Endothelial cell of umbilical vein (primary cell): ENCODE measurements at regions of chr14 and their contacts with region 1.

Region 1: GRCh38 chr14:76876076-76876475 is 49.9 kb downstream of the LRRC74A start:
- DNase-seq: peak; percentile 68
- H3K4me3 ChIP-seq: no peak overlapping the region
- H3K27ac ChIP-seq: no peak overlapping the region
- H3K4me1 ChIP-seq: no peaks in the 10 kb centered on the region
- H3K27me3 ChIP-seq: no peaks in the 10 kb centered on the region
- CTCF ChIP-seq: peak; percentile 92 to 94
- POLR2A ChIP-seq: no peak

Region 2: DNA sequence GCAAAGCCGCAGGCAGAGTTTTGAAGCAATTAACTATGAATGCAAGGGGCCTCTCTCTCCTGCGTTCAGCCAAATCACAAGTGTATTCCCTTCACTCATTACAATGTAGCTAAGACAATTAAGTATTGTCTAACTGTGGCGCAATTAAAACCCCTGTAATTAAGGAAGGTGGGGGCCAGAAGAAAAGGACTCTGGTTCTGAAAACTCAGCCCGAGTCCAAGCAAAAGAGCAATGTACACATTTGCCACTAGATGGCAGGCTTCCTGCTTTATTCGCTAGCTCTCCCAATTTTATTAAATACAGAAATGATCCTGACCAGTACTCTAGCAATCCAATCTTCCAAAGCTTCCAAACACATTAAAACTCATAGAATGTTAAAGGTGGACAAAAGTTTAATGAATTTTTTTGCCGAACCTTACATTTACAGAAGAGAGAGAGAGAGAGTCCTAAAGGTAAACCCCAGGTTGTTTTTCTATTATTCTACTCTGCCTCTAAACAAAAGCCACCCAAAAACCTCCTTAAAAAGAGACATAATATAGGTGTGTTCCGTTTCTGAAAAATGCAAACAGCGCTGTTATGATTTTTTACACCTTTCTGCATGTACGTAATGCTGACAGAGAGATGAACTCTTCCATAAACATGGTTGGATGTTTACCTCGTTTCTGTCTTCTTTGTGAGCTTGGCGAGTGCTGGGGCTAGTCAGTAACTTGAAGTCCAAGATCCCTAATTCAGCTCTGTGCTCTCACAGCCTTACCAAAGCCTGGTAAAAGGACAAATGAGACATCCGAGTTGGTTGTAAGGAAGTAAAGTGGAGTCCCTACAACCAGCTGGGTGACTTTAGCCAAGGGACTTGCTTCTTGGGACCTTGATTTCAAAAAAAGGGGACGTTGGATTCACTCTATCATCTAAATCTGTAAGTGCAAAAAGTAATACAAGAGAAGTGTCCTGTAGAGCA is 165.7 kb before region 1 on chr14:
- CTCF ChIA-PET with region 1: interaction called, 17 read pairs
- POLR2A ChIA-PET with region 1: no interaction called
- dilution Hi-C with region 1: no loop called
- intact Hi-C with region 1: loop called (anchors 2 kb)
- DNase-seq: peak; percentile 63
- H3K4me3 ChIP-seq: no peak overlapping the region
- H3K27ac ChIP-seq: no peak overlapping the region
- H3K4me1 ChIP-seq: no peaks in the 10 kb centered on the region
- H3K27me3 ChIP-seq: no peaks in the 10 kb centered on the region
- CTCF ChIP-seq: peak; percentile 71 to 72
- POLR2A ChIP-seq: no peak

Region 3: GRCh38 chr14:76904740-76905438 is 28.8 kb after region 1 on chr14:
- CTCF ChIA-PET with region 1: interaction called, 19 read pairs
- POLR2A ChIA-PET with region 1: interaction called, 12 read pairs
- dilution Hi-C with region 1: no loop called
- intact Hi-C with region 1: no loop called
- DNase-seq: peak; percentile 64
- H3K4me3 ChIP-seq: no peak overlapping the region
- H3K27ac ChIP-seq: no peak overlapping the region
- H3K4me1 ChIP-seq: peaks cover 12% of the 10 kb centered on the region
- H3K27me3 ChIP-seq: peaks cover 2 to 7% of the 10 kb centered on the region in 2 experiments
- CTCF ChIP-seq: no peak
- POLR2A ChIP-seq: no peak

Region 4: DNA sequence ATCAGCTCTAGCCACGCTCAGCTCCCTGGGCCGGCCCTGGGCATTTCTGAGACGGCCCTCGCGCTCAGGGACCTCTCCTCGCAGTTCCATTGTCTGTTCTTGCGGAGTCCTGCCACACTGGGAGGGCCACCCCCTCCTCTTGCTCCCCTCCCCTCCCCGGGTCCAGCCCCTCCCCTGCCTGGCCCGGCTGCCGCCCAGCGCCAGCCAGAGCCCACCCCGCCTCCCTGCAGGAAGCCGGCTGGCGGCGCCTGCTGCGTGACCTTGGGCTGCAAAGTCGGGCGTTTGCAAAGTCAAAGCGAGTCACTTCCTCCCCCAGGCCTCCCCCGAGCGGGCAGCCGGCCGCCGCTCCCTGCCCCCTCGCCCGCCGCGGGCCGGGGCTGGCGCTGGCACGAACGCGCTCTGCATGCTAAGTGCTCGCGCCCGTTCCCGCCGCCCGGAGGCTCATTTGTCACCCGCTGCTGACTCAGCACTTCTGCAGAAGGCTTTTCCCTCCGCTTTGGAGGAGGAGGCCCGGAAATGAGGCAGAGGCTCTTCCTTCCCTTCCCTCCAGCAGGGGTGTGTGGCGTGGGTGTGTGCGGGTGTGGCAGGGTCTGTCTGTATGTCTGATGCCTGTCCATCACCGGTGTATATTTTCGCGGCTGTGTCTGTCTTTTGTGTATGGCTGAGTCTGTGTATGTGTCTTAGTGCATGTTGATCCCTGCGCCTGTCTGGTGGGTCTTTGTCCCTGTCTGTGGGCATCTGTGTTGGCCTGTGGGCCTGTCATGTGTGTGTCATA is 80.4 kb after region 1 on chr14:
- CTCF ChIA-PET with region 1: interaction called, 5 read pairs
- POLR2A ChIA-PET with region 1: no interaction called
- dilution Hi-C with region 1: no loop called
- intact Hi-C with region 1: loop called (anchors 1 kb)
- DNase-seq: peak; percentile 99
- H3K4me3 ChIP-seq: no peak overlapping the region
- H3K27ac ChIP-seq: peak overlapping the region; percentile 95
- H3K4me1 ChIP-seq: peaks cover 73% of the 10 kb centered on the region
- H3K27me3 ChIP-seq: no peaks in the 10 kb centered on the region
- CTCF ChIP-seq: no peak
- POLR2A ChIP-seq: peak; percentile 15

Region 5: DNA sequence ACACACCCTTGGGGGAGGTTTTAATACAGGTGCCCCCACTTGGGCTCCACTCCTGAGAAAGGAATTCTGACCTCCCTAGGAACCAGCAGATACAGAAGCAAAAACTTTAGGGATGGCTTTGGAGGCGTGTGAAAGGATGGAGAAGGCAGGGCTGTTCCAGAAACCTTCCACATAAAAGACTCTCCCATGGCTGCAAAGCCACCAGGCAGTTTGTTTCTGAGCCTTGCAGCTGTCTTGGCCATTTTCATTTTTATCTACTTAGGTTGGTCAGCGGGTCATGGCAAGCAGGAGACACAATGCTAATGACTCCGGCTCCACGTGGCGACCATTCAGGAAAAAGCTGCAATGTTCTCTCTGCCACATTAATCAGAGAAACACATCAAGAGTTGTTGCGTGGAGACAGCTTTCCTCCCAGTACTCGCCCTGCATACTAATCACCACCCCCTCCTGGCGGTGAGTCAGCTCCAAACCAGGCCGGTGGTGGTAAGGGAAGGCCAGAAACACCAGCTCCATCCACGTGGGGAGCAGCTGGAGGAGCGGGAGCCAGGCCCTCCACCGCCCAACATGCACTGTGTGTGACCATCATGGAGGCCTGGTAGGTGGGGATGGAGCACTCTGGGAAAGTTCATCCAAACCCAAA is 183.3 kb after region 1 on chr14:
- CTCF ChIA-PET with region 1: interaction called, 450 read pairs
- POLR2A ChIA-PET with region 1: no interaction called
- dilution Hi-C with region 1: no loop called
- intact Hi-C with region 1: no loop called
- DNase-seq: peak; percentile 94
- H3K4me3 ChIP-seq: no peak overlapping the region
- H3K27ac ChIP-seq: peak overlapping the region; percentile 41
- H3K4me1 ChIP-seq: peaks cover 23% of the 10 kb centered on the region
- H3K27me3 ChIP-seq: no peaks in the 10 kb centered on the region
- CTCF ChIP-seq: peak; percentile 38 to 57
- POLR2A ChIP-seq: no peak

Region 6: GRCh38 chr14:77086017-77086736 is 210.1 kb after region 1 on chr14:
- CTCF ChIA-PET with region 1: interaction called, 312 read pairs
- POLR2A ChIA-PET with region 1: no interaction called
- dilution Hi-C with region 1: loop called (anchors 25 kb)
- intact Hi-C with region 1: no loop called
- DNase-seq: no peak
- H3K4me3 ChIP-seq: no peak overlapping the region
- H3K27ac ChIP-seq: no peak overlapping the region
- H3K4me1 ChIP-seq: no peaks in the 10 kb centered on the region
- H3K27me3 ChIP-seq: peaks cover 13 to 24% of the 10 kb centered on the region in 2 experiments
- CTCF ChIP-seq: no peak
- POLR2A ChIP-seq: no peak

Region 7: GRCh38 chr14:77133720-77134338 is 257.8 kb after region 1 on chr14:
- CTCF ChIA-PET with region 1: interaction called, 20 read pairs
- POLR2A ChIA-PET with region 1: no interaction called
- dilution Hi-C with region 1: no loop called
- intact Hi-C with region 1: no loop called
- DNase-seq: peak; percentile 61
- H3K4me3 ChIP-seq: no peak overlapping the region
- H3K27ac ChIP-seq: no peak overlapping the region
- H3K4me1 ChIP-seq: no peaks in the 10 kb centered on the region
- H3K27me3 ChIP-seq: peaks cover 5 to 13% of the 10 kb centered on the region in 2 experiments
- CTCF ChIP-seq: no peak
- POLR2A ChIP-seq: no peak